ENCODE measurements at regions of chr18 and their contacts with region 1.

Region 1: DNA sequence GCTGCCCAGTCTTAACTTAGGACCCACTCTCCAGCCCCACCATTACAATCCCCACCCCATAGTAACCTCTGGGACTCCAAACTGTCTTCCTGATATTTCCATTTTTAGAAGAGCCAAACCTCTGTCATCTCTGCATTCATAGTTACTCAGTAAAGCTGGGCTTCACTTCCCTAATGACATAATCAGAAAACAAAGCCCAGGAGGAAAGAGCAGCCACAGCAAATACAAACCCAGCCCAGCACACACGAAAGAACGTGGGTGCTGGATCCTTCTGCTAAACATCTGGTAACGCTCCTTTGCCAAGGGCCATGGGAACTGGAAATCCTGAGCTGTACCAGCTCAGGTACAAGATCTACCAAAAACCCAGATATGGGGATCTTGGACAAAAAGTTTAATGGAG is 36.8 kb upstream of the RIOK3 start:
- DNase-seq: no peak
- H3K4me3 ChIP-seq: no peak overlapping the region
- H3K27ac ChIP-seq: no peak overlapping the region
- H3K4me1 ChIP-seq: no peaks in the 10 kb centered on the region
- H3K27me3 ChIP-seq: no peaks in the 10 kb centered on the region
- CTCF ChIP-seq: no peak
- POLR2A ChIP-seq: no peak

Region 2: DNA sequence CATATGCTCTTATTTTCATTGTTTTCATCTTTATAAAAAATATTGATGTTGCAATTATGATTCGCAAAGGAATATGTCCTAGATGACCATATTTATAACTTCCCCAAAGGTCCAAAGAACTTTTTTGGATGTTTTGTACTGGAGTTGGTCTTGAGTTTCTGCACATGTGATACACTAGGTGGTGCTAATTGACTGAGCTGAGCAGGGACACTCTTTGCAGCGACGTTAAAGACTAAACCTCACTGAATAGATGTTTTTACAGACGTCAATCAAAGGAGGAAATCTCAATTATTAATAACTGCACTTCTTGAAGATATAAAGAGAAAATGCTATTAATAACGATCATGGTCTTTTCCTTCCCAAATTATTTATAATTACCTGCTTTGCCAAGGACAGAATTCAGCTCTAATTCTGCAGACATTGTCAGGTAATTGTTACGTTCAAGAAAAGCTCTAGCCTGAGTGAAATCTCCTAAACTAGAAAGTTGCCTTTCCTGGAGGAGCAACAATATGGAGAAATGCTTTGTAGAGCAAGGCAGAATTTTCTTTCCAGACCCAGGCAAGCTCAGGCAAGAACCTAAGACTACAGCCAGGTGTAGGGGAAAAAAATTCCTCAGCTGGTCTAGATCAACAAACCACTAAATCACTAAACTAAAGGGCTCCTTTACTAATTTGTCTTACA is 602.5 kb before region 1 on chr18:
- CTCF ChIA-PET with region 1: interaction called, 13 read pairs
- POLR2A ChIA-PET with region 1: no interaction called
- dilution Hi-C with region 1: no loop called
- intact Hi-C with region 1: loop called (anchors 10 kb)
- DNase-seq: peak; percentile 56
- H3K4me3 ChIP-seq: no peak overlapping the region
- H3K27ac ChIP-seq: no peak overlapping the region
- H3K4me1 ChIP-seq: peaks cover 11% of the 10 kb centered on the region
- H3K27me3 ChIP-seq: peaks cover 30 to 44% of the 10 kb centered on the region in 2 experiments
- CTCF ChIP-seq: peak; percentile 22 to 46
- POLR2A ChIP-seq: no peak

Region 3: GRCh38 chr18:23077493-23078256 is 338.6 kb before region 1 on chr18:
- CTCF ChIA-PET with region 1: interaction called, 26 read pairs
- POLR2A ChIA-PET with region 1: no interaction called
- dilution Hi-C with region 1: no loop called
- intact Hi-C with region 1: loop called (anchors 1 kb)
- DNase-seq: peak; percentile 24
- H3K4me3 ChIP-seq: no peak overlapping the region
- H3K27ac ChIP-seq: no peak overlapping the region
- H3K4me1 ChIP-seq: peaks cover 4% of the 10 kb centered on the region
- H3K27me3 ChIP-seq: peaks cover 0 to 2% of the 10 kb centered on the region in 2 experiments
- CTCF ChIP-seq: peak; percentile 20 to 28
- POLR2A ChIP-seq: no peak

Region 4: DNA sequence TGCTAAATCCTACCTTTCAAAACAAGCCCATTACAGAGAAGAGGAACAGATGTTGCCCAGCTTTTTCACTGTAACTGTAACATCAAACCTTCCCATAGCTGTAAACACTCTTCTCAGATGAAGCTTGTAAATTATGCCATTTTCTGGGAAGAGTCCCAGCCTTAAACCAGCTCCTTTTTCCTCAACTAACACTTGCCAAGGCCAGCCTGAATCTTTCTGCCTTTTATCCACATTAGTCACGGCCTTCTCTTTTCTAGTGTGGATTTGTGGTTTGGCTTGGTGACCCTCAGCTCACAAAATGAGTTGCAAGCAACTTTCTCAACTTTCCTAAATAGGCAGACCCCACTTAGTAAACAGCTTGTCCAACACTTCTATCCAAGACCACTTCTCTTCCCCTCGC is 190.8 kb before region 1 on chr18:
- CTCF ChIA-PET with region 1: interaction called, 13 read pairs
- POLR2A ChIA-PET with region 1: no interaction called
- dilution Hi-C with region 1: no loop called
- intact Hi-C with region 1: no loop called
- DNase-seq: peak; percentile 75
- H3K4me3 ChIP-seq: no peak overlapping the region
- H3K27ac ChIP-seq: peak overlapping the region; percentile 98
- H3K4me1 ChIP-seq: peaks cover 52% of the 10 kb centered on the region
- H3K27me3 ChIP-seq: no peaks in the 10 kb centered on the region
- CTCF ChIP-seq: no peak
- POLR2A ChIP-seq: no peak

Region 5: GRCh38 chr18:23291456-23292205 is 124.7 kb before region 1 on chr18:
- CTCF ChIA-PET with region 1: no interaction called
- POLR2A ChIA-PET with region 1: no interaction called
- dilution Hi-C with region 1: no loop called
- intact Hi-C with region 1: no loop called
- DNase-seq: no peak
- H3K4me3 ChIP-seq: no peak overlapping the region
- H3K27ac ChIP-seq: no peak overlapping the region
- H3K4me1 ChIP-seq: no peaks in the 10 kb centered on the region
- H3K27me3 ChIP-seq: no peaks in the 10 kb centered on the region
- CTCF ChIP-seq: no peak
- POLR2A ChIP-seq: no peak

Region 6: DNA sequence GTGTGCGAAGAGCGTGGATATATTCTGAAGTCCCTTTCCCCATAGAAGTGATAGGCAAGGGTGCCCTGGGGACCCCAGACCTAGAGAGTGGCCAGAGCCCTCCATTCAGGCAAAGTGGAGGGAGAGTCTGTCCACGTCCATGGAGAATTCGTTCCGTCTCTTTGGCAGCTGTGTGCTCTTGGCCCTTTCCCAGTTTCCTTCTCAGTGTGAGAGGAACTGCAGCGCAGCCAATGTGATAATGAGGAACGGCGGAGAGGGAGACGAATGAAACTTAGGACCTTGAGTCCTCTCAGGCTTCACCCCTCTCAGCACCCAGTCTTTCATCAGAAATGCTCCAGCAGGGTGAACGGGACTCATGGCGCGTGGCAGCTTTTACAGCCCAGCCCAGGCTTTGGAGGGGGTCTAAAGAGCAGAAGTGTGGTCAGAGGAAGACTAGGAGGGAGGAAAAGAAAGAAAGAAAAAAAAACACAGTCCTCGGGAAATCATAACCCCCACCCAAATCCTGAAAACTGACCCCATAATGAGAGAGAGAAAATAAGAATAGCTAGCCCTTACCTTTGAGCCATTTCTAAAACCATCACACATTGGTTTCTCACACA is 58.2 kb before region 1 on chr18:
- CTCF ChIA-PET with region 1: interaction called, 14 read pairs
- POLR2A ChIA-PET with region 1: no interaction called
- dilution Hi-C with region 1: no loop called
- intact Hi-C with region 1: no loop called
- DNase-seq: peak; percentile 63
- H3K4me3 ChIP-seq: no peak overlapping the region
- H3K27ac ChIP-seq: no peak overlapping the region
- H3K4me1 ChIP-seq: peaks cover 10% of the 10 kb centered on the region
- H3K27me3 ChIP-seq: no peaks in the 10 kb centered on the region
- CTCF ChIP-seq: no peak
- POLR2A ChIP-seq: no peak

Region 7: GRCh38 chr18:23563377-23564043 is 147.2 kb after region 1 on chr18:
- CTCF ChIA-PET with region 1: no interaction called
- POLR2A ChIA-PET with region 1: no interaction called
- dilution Hi-C with region 1: no loop called
- intact Hi-C with region 1: no loop called
- DNase-seq: no peak
- H3K4me3 ChIP-seq: no peak overlapping the region
- H3K27ac ChIP-seq: no peak overlapping the region
- H3K4me1 ChIP-seq: no peaks in the 10 kb centered on the region
- H3K27me3 ChIP-seq: no peaks in the 10 kb centered on the region
- CTCF ChIP-seq: no peak
- POLR2A ChIP-seq: no peak

Measured in endothelial cell of umbilical vein (primary cell).